A549 (cell line): ENCODE measurements at regions of chr20 and their contacts with region 1.

Region 1: DNA sequence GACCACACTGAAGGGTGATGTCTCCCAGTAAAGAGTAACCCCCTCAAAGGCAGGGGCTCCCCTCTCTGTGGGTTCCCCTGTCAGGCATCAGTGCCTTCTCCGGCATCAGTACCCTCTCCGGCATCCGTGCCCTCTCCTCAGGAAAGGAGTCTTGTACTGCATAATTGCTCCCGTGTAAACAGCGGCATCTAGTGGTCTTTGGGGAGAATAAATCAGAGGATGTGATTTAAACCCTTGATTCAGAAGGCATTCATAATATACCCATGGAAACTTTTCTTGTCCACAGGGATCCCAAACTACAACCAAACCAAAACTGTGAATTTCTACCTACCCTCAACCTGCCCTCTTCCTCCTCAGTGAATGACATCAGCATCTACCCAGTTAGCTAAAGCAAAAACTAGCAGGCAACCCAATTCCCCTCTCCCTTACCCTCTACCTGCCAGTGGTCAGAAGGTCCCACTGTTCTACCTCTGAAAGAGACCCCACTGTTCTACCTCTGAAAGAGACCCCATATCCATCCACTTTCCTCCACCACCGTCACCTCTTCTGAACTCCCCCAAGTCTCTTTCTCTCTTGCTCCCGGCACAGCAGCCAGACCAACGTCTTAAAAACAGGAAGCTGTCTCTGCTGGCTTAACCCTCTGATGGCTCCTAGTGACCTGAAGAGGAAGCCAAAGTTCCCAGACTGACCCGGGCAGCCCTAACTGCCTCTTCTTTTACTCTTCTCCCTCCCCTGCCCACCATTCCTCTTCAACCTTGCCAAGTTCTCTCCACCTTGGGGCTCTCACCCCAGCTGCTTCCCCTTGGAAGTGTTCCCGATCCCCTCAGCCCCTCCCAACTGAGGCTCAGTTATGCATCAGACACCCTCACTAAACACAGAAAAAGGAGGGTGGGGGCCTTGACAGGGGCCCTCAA is 27.2 kb downstream of the UBE2V1 start:
- DNase-seq: peak; percentile 70 to 81
- ATAC-seq: peak; percentile 87 to 91
- H3K4me3 ChIP-seq: no peak overlapping the region
- H3K27ac ChIP-seq: peak overlapping the region; percentile 19 to 69; a peak in 4 of 6 replicates
- H3K4me1 ChIP-seq: peaks cover 29% of the 10 kb centered on the region
- CTCF ChIP-seq: peak; percentile 92
- EP300 ChIP-seq: no peak
- POLR2A ChIP-seq: no peak
- RAD21 ChIP-seq: peak; percentile 72 to 81

Region 2: GRCh38 chr20:50034567-50035208 is 51.0 kb before region 1 on chr20:
- CTCF ChIA-PET with region 1: interaction called, 18 read pairs
- POLR2A ChIA-PET with region 1: no interaction called
- DNase-seq: peak; percentile 78 to 86
- ATAC-seq: peak; percentile 54 to 71
- H3K4me3 ChIP-seq: no peak overlapping the region
- H3K27ac ChIP-seq: peak overlapping the region; percentile 93 to 95
- H3K4me1 ChIP-seq: peaks cover 62% of the 10 kb centered on the region
- CTCF ChIP-seq: no peak
- EP300 ChIP-seq: no peak
- POLR2A ChIP-seq: no peak
- RAD21 ChIP-seq: no peak

Region 3: DNA sequence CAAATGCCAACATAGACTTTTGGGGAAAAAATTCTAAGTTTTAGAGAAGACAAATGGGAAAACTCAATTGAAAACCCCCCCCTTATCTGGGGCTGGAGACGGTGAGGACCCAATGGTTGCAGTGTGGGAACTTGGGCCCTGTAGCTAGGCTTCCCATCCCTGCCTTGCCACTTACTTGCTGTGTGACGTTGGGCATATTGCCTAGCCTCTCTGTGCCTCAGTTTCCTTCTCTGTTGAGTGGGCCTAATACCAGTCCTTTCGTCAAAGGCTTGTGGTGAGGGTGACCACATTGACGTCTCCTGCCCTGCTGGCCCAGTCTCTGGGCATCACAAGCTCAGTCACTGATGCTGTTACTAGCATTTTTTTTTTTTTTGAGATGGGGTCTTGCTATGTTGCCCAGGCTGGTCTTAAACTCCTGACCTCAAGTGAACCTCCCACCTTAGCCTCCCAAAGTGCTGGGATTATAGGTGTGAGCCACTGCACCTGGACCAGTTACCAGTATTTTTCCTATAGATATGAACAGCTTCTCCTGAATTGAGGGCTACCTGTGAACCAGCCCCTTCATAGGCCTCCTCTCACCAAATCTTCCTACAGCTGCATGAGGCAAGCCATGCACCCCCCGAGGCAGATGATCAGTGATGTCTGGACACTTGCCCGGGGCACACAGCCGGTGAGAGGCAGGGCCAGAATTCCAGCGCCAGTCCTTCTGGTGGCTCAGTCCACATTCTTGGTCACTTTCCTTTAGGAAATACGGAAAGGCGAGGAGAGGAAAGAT is 23.8 kb before region 1 on chr20:
- CTCF ChIA-PET with region 1: interaction called, 15 read pairs
- POLR2A ChIA-PET with region 1: no interaction called
- DNase-seq: no peak
- ATAC-seq: no peak
- H3K4me3 ChIP-seq: no peak overlapping the region
- H3K27ac ChIP-seq: no peak overlapping the region
- H3K4me1 ChIP-seq: no peaks in the 10 kb centered on the region
- CTCF ChIP-seq: no peak
- EP300 ChIP-seq: no peak
- POLR2A ChIP-seq: no peak
- RAD21 ChIP-seq: no peak

Region 4: DNA sequence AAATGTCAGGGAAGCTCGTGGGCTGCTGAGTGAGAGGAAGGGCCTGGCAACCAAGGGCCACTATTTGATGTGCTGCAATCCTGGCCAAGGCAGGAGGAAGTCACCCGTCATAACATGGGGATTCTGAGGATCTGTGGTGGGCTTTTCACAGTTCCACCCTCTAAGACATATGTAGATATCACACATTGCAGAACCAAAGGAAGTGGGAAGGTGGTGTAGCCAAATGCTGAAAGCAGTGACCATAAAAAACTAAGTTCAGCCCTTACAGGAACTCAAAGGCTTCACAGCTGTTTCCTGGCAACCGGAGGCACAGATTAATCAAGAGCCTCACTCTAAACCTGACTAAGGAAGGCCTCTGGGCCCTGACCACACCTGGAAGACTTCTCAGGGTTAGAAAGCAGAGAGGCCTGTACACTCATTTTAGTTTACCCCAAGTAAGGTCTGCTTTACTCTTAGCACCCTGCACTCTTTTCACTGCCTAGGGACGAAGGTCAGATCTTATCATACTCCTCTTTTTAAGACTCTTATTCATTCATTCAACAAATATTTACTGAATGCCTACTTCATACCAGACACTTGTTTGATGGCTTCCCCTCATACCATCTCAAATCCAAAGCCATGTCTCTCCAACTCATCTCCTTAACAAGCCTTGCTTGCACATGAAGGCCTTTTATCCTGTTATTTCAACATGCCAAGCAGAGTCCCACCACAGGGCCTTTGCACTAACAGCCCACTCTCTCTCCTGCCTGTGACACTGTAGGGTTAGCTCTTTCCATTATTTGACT is 24.6 kb after region 1 on chr20:
- CTCF ChIA-PET with region 1: interaction called, 17 read pairs
- POLR2A ChIA-PET with region 1: no interaction called
- DNase-seq: peak in 1 of 2 experiments; percentile 31
- ATAC-seq: peak in 1 of 2 experiments; percentile 3; a peak in 2 of 6 replicates
- H3K4me3 ChIP-seq: no peak overlapping the region
- H3K27ac ChIP-seq: peak overlapping the region; percentile 5 to 94; a peak in 4 of 6 replicates
- H3K4me1 ChIP-seq: peaks cover 67% of the 10 kb centered on the region
- CTCF ChIP-seq: no peak
- EP300 ChIP-seq: no peak
- POLR2A ChIP-seq: no peak
- RAD21 ChIP-seq: no peak

Region 5: DNA sequence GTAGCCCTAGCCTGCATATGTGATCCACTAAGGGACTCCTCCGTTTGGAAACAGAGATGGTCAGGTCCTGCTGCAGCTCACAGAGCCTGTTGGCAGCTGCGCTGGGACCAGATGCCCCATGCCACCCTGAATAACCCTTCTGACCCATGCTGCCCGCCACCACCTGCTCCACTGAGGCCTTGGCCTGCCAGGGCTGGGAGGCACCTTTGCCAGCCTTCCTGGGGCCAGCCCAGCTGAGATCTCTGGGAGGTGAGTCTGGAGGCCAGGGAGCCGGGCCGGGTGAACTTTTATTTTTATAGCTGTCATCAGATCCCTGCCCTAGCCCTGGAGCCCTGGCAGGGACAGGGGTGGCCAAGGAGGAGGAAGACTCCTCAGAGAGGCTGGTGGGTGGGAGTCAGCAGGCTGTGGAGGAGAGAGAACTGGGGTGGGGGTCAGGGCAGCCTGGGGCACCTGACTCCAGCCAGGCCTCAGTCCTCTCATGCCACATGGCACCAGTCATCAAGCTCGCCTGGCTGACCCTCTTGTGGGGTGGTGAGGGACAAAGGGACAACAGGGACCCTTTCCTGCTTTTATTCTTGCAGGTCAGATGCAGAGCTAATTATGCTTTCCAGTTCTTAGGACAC is 114.9 kb after region 1 on chr20:
- CTCF ChIA-PET with region 1: no interaction called
- POLR2A ChIA-PET with region 1: no interaction called
- DNase-seq: no peak
- ATAC-seq: no peak
- H3K4me3 ChIP-seq: no peak overlapping the region
- H3K27ac ChIP-seq: peak overlapping the region in 1 of 2 experiments; percentile 52; a peak in 2 of 6 replicates
- H3K4me1 ChIP-seq: peaks cover 12% of the 10 kb centered on the region
- CTCF ChIP-seq: no peak
- EP300 ChIP-seq: no peak
- POLR2A ChIP-seq: no peak
- RAD21 ChIP-seq: no peak